Activated naive CD4-positive, alpha-beta T cell treated with anti-CD3 and anti-CD28 coated beads, Interleukin-2, amount 10 ng/mL, durations not matched to agents 7 days and 5 days (primary cell): ENCODE measurements at regions of chr2 and their contacts with region 1.

Region 1: DNA sequence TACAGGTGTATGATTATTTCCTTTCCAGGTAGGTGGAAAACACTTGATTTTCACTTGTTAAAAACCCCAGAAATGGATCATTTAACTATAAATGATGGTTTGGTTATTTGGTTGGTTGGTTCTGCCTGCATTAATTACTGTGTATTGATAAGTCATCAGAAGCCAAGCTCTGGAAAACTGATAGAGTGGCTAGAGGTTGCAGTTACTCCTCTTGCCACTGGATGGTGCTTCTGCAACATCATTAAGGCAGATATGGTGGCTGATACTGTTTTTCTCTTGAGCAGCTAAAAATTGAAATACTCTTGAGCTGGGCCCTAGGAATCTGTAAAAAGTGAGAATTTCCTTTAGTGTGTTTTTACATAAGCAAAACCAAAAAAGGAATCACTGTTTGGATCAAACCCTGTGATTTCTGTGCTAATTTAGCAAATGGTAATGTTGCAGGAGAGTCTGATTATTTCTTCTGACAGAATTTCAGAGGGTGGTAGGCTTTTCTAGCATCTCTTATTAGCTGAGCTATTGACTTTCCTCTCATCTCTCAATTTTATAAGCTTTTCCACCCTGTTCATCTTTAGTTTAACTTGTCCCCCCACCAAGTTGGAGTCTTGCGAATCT is 54.3 kb downstream of the RAB10 start:
- DNase-seq: peak; percentile 29
- H3K4me3 Mint-ChIP-seq: no peak overlapping the region
- H3K27ac Mint-ChIP-seq: no peak overlapping the region
- H3K4me1 Mint-ChIP-seq: peaks cover 11% of the 10 kb centered on the region
- H3K27me3 Mint-ChIP-seq: no peaks in the 10 kb centered on the region

Region 2: DNA sequence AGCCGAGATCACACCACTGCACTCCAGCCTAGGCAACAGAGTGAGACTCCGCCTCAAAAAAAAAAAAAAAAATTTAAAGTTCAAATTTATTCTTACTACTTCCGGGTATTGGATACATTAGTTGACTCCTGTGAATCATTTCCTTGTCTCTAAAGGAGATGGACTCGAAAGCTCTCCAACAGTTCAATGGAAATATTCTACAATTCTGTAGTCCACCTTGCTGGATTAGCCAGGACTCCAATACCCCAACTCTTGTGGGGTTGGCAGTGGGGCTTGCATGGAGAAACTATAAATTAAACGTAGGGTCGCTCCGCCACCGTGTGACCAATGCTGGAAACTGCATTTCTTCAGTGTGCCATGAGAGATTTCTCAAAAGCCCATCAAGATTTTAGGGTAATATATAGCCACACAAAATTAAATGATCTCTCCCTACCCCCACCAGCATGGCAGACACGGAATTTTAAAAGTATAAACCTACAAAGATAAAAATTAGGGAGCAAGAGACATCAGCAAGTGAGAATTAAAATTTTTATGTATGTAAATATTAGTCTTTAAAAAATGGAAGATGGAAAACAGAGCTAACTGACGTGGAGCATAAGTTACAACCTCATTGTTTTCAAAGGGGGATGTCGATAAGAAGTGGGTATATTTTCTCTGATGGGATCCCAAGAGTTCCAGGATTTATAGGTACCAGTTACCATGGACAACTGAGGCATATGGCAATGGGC is 57.0 kb after region 1 on chr2:
- CTCF ChIA-PET with region 1: interaction called, 11 read pairs
- DNase-seq: peak; percentile 75
- H3K4me3 Mint-ChIP-seq: no peak overlapping the region
- H3K27ac Mint-ChIP-seq: no peak overlapping the region
- H3K4me1 Mint-ChIP-seq: no peaks in the 10 kb centered on the region
- H3K27me3 Mint-ChIP-seq: peaks cover 13% of the 10 kb centered on the region